ENCODE measurements at regions of chr7 and their contacts with region 1.

Region 1: GRCh38 chr7:151315038-151315655 is 26.5 kb upstream of the NUB1 start:
- DNase-seq: peak; percentile 36 to 91 (median 67)
- ATAC-seq: peak; percentile 82 to 97 (median 90)
- H3K4me3 ChIP-seq: no peak overlapping the region
- H3K4me3 Mint-ChIP-seq: peak overlapping the region in 2 of 3 donors; percentile 4 to 21
- H3K27ac ChIP-seq: no peak overlapping the region
- H3K27ac Mint-ChIP-seq: peak overlapping the region in 1 of 2 donors; percentile 70
- H3K4me1 ChIP-seq: peaks cover 2 to 8% of the 10 kb centered on the region in 2 experiments
- H3K4me1 Mint-ChIP-seq: peaks cover 5 to 9% (median 8%) of the 10 kb centered on the region in 3 donors
- H3K27me3 ChIP-seq: no peaks in the 10 kb centered on the region
- H3K27me3 Mint-ChIP-seq: no peaks in the 10 kb centered on the region

Region 2: GRCh38 chr7:151129117-151129959 is 185.8 kb before region 1 on chr7:
- CTCF ChIA-PET with region 1: interaction called, 4 to 12 read pairs
- POLR2A ChIA-PET with region 1: interaction called in 1 of 2 experiments, 4 read pairs
- DNase-seq: no peak
- ATAC-seq: no peak
- H3K4me3 ChIP-seq: no peak overlapping the region
- H3K4me3 Mint-ChIP-seq: no peak overlapping the region
- H3K27ac ChIP-seq: no peak overlapping the region
- H3K27ac Mint-ChIP-seq: no peak overlapping the region
- H3K4me1 ChIP-seq: peaks cover 0 to under 1% of the 10 kb centered on the region in 2 experiments
- H3K4me1 Mint-ChIP-seq: no peaks in the 10 kb centered on the region
- H3K27me3 ChIP-seq: peaks cover 2 to 3% of the 10 kb centered on the region in 2 experiments
- H3K27me3 Mint-ChIP-seq: no peaks in the 10 kb centered on the region

Region 3: GRCh38 chr7:151206914-151207313 is 108.2 kb before region 1 on chr7:
- CTCF ChIA-PET with region 1: no interaction called
- POLR2A ChIA-PET with region 1: no interaction called
- DNase-seq: peak in 25 of 35 experiments; percentile 10 to 65 (median 23)
- ATAC-seq: peak; percentile 64 to 79 (median 76)
- H3K4me3 ChIP-seq: no peak overlapping the region
- H3K4me3 Mint-ChIP-seq: peak overlapping the region; percentile 22 to 52 (median 51)
- H3K27ac ChIP-seq: peak overlapping the region; percentile 89
- H3K27ac Mint-ChIP-seq: peak overlapping the region; percentile 90 to 91
- H3K4me1 ChIP-seq: peaks cover 3 to 43% of the 10 kb centered on the region in 2 experiments
- H3K4me1 Mint-ChIP-seq: peaks cover 27 to 42% (median 29%) of the 10 kb centered on the region in 3 donors
- H3K27me3 ChIP-seq: peaks cover 0 to 15% of the 10 kb centered on the region in 2 experiments
- H3K27me3 Mint-ChIP-seq: no peaks in the 10 kb centered on the region

Region 4: GRCh38 chr7:151280388-151281019 is 34.6 kb before region 1 on chr7:
- CTCF ChIA-PET with region 1: no interaction called
- POLR2A ChIA-PET with region 1: interaction called in 1 of 2 experiments, 11 read pairs
- DNase-seq: no peak
- ATAC-seq: no peak
- H3K4me3 ChIP-seq: no peak overlapping the region
- H3K4me3 Mint-ChIP-seq: no peak overlapping the region
- H3K27ac ChIP-seq: no peak overlapping the region
- H3K27ac Mint-ChIP-seq: no peak overlapping the region
- H3K4me1 ChIP-seq: peaks cover 0 to 20% of the 10 kb centered on the region in 2 experiments
- H3K4me1 Mint-ChIP-seq: peaks cover 12 to 18% (median 17%) of the 10 kb centered on the region in 3 donors
- H3K27me3 ChIP-seq: peaks cover 2 to 38% of the 10 kb centered on the region in 2 experiments
- H3K27me3 Mint-ChIP-seq: peaks cover 8 to 30% of the 10 kb centered on the region in 2 donors

Region 5: DNA sequence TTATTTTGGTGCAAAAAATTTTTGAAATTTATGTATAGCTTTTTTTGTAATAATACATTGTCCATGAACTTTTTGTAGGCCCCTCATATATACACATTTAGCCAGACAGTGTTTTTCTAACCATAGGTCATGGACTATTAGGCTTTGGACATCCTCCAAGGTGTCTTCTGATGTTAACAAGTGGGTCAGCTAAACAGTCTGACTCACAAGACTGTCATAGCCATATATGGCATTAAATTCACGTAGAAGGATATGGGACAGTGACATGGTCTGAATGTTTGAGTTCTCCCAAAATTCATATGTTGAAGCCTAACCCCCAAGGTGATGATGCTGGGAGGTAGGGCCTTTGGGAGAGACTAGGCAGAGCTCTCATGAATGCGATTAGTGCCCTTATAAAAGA is 12.5 kb after region 1 on chr7:
- CTCF ChIA-PET with region 1: interaction called, 5 to 15 read pairs
- POLR2A ChIA-PET with region 1: interaction called in 1 of 2 experiments, 3 read pairs
- DNase-seq: no peak
- ATAC-seq: no peak
- H3K4me3 ChIP-seq: no peak overlapping the region
- H3K4me3 Mint-ChIP-seq: no peak overlapping the region
- H3K27ac ChIP-seq: no peak overlapping the region
- H3K27ac Mint-ChIP-seq: no peak overlapping the region
- H3K4me1 ChIP-seq: no peaks in the 10 kb centered on the region
- H3K4me1 Mint-ChIP-seq: no peaks in the 10 kb centered on the region
- H3K27me3 ChIP-seq: no peaks in the 10 kb centered on the region
- H3K27me3 Mint-ChIP-seq: peaks cover 0 to 7% of the 10 kb centered on the region in 2 donors

Region 6: GRCh38 chr7:151341357-151342101 is 26.4 kb after region 1 on chr7 and contains the start of gene NUB1:
- CTCF ChIA-PET with region 1: interaction called, 4 to 13 read pairs
- POLR2A ChIA-PET with region 1: interaction called in 1 of 2 experiments, 3 read pairs
- DNase-seq: peak; percentile 66 to 97 (median 86)
- ATAC-seq: peak; percentile 85 to 95 (median 92)
- H3K4me3 ChIP-seq: peak within 1 kb of the TSS; percentile 61 to 77
- H3K4me3 Mint-ChIP-seq: peak within 1 kb of the TSS; percentile 82 to 90 (median 85)
- H3K27ac ChIP-seq: peak within 1 kb of the TSS; percentile 74
- H3K27ac Mint-ChIP-seq: peak within 1 kb of the TSS; percentile 93 to 94
- H3K4me1 ChIP-seq: peaks cover 15 to 32% of the 10 kb centered on the region in 2 experiments
- H3K4me1 Mint-ChIP-seq: peaks cover 26 to 39% (median 35%) of the 10 kb centered on the region in 3 donors
- H3K27me3 ChIP-seq: no peaks in the 10 kb centered on the region
- H3K27me3 Mint-ChIP-seq: no peaks in the 10 kb centered on the region
- total RNA-seq, gene NUB1: 77.4 to 98.9 (median 87.7) TPM

Region 7: DNA sequence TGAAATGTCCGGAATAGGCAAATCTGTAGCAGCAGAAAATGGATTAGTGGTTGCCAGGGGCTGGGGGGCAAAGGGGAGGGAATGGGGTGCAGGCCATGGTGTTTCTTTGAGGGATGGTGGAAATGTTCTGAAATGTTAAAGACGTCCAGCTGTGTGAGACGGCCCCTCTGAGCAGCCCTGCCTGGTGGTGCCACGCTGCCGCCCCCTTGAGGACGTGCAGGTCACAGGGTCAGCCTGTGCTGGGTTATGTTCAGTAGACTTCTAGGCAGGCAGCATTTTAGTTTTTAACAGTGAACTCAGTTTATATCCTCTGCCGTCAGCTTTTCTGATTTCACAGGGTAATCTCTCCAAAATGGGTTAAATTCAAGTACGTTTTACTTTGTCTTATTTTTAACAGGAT is 35.9 kb after region 1 on chr7:
- CTCF ChIA-PET with region 1: interaction called, 36 to 59 read pairs
- POLR2A ChIA-PET with region 1: interaction called in 1 of 2 experiments, 3 read pairs
- DNase-seq: peak in 3 of 35 experiments; percentile 20 to 44 (median 26)
- ATAC-seq: no peak
- H3K4me3 ChIP-seq: no peak overlapping the region
- H3K4me3 Mint-ChIP-seq: peak overlapping the region; percentile 17 to 78 (median 60)
- H3K27ac ChIP-seq: peak overlapping the region; percentile 98
- H3K27ac Mint-ChIP-seq: peak overlapping the region; percentile 86 to 91
- H3K4me1 ChIP-seq: peaks cover 28 to 37% of the 10 kb centered on the region in 2 experiments
- H3K4me1 Mint-ChIP-seq: peaks cover 56 to 65% (median 61%) of the 10 kb centered on the region in 3 donors
- H3K27me3 ChIP-seq: no peaks in the 10 kb centered on the region
- H3K27me3 Mint-ChIP-seq: no peaks in the 10 kb centered on the region

Region 8: DNA sequence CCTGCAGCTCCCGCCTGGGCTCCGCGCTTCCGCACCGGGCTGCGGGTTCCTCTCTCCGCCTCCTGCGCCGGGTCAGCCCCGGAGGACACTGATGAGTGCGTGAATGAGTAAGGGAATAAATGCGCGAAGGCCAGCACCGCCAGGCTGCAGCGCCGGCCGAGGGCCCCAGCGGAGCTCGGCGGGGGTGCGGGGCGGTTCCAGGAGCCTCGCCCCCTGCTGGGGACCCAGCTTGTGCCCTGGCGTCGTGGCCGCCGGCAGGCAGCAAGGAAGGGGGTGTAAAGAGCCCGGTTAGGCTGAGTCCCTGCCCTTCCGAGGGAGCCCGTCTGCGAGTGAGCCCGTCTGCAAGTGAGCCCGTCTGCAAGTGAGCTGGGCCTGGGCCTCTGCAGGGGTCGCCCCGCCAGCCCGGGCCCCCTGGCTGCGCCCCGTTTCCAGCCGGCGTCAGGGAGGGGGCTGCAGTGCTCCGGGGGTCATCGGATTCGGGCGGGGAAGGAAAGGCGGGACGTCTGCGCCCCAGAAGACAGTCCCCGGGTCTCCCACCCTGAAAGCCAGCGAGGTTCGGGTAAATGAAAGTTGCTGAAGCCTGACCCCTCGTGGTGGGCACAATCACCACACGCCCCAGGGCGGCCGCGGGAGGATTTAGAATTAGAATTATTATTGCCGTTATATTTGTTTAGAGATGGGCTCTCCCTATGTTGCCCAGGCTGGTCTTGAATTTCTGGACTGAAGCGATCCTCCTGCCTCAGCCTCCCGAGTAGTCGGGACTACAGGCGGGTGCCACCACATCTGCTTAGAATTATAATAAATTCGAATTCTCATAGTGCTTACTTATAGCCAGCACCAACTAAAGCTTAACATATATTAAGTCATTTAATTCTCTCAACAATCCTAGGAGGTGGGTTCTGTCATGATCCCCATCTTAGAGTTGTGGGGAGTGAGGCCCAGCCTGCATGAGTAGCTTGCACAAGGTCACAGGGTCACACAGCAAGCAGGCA is 133.4 kb after region 1 on chr7:
- CTCF ChIA-PET with region 1: interaction called, 19 to 24 read pairs
- POLR2A ChIA-PET with region 1: interaction called in 1 of 2 experiments, 4 read pairs
- DNase-seq: peak; percentile 51 to 85 (median 74)
- ATAC-seq: peak; percentile 87 to 91 (median 90)
- H3K4me3 ChIP-seq: peak overlapping the region; percentile 56 to 71
- H3K4me3 Mint-ChIP-seq: peak overlapping the region; percentile 67 to 72 (median 69)
- H3K27ac ChIP-seq: no peak overlapping the region
- H3K27ac Mint-ChIP-seq: peak overlapping the region in 1 of 2 donors; percentile 61
- H3K4me1 ChIP-seq: peaks cover 0 to 27% of the 10 kb centered on the region in 2 experiments
- H3K4me1 Mint-ChIP-seq: peaks cover 4 to 19% (median 8%) of the 10 kb centered on the region in 3 donors
- H3K27me3 ChIP-seq: peaks cover 0 to 22% of the 10 kb centered on the region in 2 experiments
- H3K27me3 Mint-ChIP-seq: peaks cover 0 to 2% of the 10 kb centered on the region in 2 donors